HEK293 (cell line): ENCODE measurements at regions of chr19 and their contacts with region 1.

Region 1: DNA sequence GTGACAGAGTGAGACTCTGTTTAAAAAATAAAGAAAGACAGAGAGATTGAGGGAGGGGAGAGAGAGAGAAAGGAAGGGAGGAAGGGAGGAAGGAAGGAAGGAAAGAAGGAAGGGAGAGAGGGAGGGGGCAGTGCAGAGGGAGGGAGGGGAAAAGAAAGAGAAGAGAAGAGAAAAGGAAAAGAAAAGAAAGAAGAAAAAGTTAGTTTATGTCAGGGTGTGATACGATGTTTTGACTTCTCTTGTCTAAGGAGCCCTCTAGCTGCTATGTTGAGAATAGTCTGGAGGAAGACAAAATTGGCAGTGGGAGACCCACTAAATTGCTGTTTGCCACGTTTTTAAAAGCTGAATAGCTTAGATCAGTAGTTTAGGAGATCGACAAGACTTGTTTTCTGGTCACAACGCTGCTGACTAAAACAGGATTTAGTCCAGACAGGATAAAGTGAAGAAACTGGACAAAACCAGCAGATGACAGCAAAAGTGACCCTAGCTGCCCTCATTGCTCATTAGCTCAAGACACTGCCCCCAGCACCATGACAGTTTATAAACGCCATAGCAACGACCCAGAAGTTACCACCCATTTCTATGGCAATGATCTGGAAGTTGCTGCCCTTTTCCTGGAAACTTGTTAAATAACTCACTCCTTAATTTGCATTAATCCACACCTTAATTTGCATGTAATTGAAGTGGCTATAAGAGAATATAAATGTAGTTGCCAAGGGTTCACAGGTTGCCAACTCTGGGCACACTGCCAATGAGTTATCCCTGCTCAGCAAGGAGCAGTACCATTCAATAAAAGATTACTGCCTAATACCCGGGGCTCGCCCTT is 11.1 kb downstream of the TEX101 start:
- H3K4me3 ChIP-seq: no peak overlapping the region
- H3K27ac ChIP-seq: no peak overlapping the region
- H3K4me1 ChIP-seq: peaks cover 12% of the 10 kb centered on the region
- CTCF ChIP-seq: peak; percentile 91

Region 2: GRCh38 chr19:43316592-43317319 is 109.0 kb before region 1 on chr19:
- CTCF ChIA-PET with region 1: interaction called, 12 read pairs
- POLR2A ChIA-PET with region 1: no interaction called
- H3K4me3 ChIP-seq: no peak overlapping the region
- H3K27ac ChIP-seq: no peak overlapping the region
- H3K4me1 ChIP-seq: peaks cover 3% of the 10 kb centered on the region; the same call in 1 of the 2 replicates
- CTCF ChIP-seq: peak; percentile 99

Region 3: GRCh38 chr19:43337737-43338136 is 88.0 kb before region 1 on chr19:
- CTCF ChIA-PET with region 1: interaction called, 11 read pairs
- POLR2A ChIA-PET with region 1: no interaction called
- H3K4me3 ChIP-seq: no peak overlapping the region
- H3K27ac ChIP-seq: no peak overlapping the region
- H3K4me1 ChIP-seq: peaks cover 30% of the 10 kb centered on the region
- CTCF ChIP-seq: no peak

Region 4: DNA sequence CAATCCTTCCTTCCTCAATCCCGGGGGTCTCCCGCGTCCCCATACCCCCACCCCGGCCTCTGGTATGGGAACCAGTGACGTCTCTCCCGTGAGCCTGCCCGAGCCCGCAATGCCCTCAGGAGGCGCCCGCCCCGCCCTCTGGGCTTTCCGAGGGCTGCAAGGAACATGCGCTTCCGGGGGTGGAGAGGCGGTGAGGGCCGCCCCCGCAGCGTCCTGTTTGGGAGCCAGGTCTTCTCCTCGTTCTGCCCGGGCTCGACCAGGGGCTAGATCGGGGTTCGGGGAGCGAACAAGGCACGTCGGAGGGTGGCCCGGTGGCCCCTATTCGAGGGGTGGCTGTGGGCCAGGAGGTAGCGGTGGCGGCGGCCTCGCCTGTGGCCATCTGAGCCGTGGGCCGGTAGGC is 17.7 kb before region 1 on chr19:
- CTCF ChIA-PET with region 1: interaction called, 33 read pairs
- POLR2A ChIA-PET with region 1: no interaction called
- H3K4me3 ChIP-seq: no peak overlapping the region
- H3K27ac ChIP-seq: no peak overlapping the region
- H3K4me1 ChIP-seq: peaks cover 3% of the 10 kb centered on the region
- CTCF ChIP-seq: no peak

Region 5: DNA sequence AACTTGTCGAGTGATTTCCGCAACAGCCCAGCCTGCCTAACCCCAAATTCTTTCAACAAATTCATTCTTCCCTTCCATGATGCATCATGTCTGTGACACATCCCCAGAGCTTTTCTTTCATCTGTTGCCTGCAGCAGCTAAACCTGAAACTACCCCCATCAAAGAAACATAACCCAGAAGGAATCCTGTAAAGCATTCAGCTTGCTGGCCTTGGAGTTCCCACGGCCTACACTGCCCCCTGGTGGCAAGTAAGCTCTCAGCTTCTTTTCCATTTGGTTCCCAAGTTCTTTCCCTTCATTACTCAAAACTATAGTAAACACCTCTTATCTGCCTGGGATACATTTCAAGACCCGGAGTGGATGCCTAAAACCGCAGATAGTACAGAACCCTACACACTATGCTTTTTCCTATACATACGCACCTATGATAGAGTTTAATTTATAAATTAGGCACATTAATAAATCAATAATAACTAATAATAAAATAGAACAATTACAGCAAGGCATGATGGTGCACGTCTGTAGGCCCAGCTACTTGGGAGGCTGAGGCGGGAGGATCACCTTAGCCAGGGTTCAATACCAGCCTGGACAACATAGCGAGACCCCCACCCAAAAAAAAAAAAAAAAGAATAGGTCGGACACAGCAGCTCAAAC is 93.8 kb after region 1 on chr19:
- CTCF ChIA-PET with region 1: interaction called, 147 read pairs
- POLR2A ChIA-PET with region 1: interaction called, 4 read pairs
- H3K4me3 ChIP-seq: no peak overlapping the region
- H3K27ac ChIP-seq: no peak overlapping the region
- H3K4me1 ChIP-seq: peaks cover 3% of the 10 kb centered on the region; the same call in 1 of the 2 replicates
- CTCF ChIP-seq: peak; percentile 92

Region 6: DNA sequence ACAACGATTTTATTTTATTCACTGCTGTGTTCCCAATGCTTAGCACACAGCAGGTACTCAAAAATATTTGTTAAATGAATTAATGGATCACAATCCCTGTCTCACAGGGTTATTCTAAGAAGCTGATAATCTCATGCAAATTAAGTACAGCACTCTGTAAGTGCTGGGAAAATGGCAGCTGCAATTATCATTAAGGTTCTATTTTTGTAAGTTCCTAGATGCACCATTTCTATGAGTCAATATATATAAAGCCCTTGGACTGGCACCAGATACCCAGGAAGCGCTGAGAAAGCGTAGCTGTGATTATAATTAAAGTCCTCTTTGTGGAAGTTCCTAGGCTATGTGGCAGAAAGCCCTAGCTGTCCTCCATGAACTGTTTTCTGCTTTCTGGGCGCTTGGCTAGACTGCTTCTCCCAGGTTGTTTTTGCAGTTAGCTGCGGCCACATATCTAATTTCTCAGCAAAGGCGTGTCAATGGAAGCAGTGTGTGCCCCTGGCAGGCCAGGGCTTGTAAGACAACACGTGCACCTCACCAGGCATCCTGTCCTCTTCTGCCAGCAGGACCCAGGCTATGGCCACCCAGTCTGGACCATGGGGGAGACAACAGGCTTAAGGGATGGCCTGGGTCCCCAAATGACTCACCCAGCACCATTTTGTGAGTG is 180.9 kb after region 1 on chr19:
- CTCF ChIA-PET with region 1: no interaction called
- POLR2A ChIA-PET with region 1: no interaction called
- H3K4me3 ChIP-seq: no peak overlapping the region
- H3K27ac ChIP-seq: peak overlapping the region; percentile 58
- H3K4me1 ChIP-seq: peaks cover 28% of the 10 kb centered on the region
- CTCF ChIP-seq: no peak